Endothelial cell of umbilical vein (primary cell): ENCODE measurements at regions of chr19 and their contacts with region 1.

Region 1: GRCh38 chr19:45886427-45887199 is 672 bp upstream of the IRF2BP1 start:
- DNase-seq: peak; percentile 92
- H3K4me3 ChIP-seq: peak overlapping the region; percentile 48 to 94 (median 57)
- H3K27ac ChIP-seq: peak overlapping the region; percentile 80
- H3K4me1 ChIP-seq: peaks cover 10% of the 10 kb centered on the region
- H3K27me3 ChIP-seq: no peaks in the 10 kb centered on the region
- CTCF ChIP-seq: no peak
- POLR2A ChIP-seq: peak; percentile 83

Region 2: GRCh38 chr19:45862564-45863334 is 23.9 kb before region 1 on chr19 and contains the start of gene SYMPK:
- CTCF ChIA-PET with region 1: interaction called, 24 read pairs
- POLR2A ChIA-PET with region 1: interaction called, 3 read pairs
- dilution Hi-C with region 1: no loop called
- intact Hi-C with region 1: loop called (anchors 1 kb)
- DNase-seq: peak; percentile 99
- H3K4me3 ChIP-seq: peak within 1 kb of the TSS; percentile 49 to 90 (median 86)
- H3K27ac ChIP-seq: peak within 1 kb of the TSS; percentile 53
- H3K4me1 ChIP-seq: peaks cover 4% of the 10 kb centered on the region
- H3K27me3 ChIP-seq: peaks cover 20 to 22% of the 10 kb centered on the region in 2 experiments
- CTCF ChIP-seq: no peak
- POLR2A ChIP-seq: peak; percentile 90
- total RNA-seq, gene SYMPK: 94.5 and 95.7 TPM in 2 replicates

Region 3: DNA sequence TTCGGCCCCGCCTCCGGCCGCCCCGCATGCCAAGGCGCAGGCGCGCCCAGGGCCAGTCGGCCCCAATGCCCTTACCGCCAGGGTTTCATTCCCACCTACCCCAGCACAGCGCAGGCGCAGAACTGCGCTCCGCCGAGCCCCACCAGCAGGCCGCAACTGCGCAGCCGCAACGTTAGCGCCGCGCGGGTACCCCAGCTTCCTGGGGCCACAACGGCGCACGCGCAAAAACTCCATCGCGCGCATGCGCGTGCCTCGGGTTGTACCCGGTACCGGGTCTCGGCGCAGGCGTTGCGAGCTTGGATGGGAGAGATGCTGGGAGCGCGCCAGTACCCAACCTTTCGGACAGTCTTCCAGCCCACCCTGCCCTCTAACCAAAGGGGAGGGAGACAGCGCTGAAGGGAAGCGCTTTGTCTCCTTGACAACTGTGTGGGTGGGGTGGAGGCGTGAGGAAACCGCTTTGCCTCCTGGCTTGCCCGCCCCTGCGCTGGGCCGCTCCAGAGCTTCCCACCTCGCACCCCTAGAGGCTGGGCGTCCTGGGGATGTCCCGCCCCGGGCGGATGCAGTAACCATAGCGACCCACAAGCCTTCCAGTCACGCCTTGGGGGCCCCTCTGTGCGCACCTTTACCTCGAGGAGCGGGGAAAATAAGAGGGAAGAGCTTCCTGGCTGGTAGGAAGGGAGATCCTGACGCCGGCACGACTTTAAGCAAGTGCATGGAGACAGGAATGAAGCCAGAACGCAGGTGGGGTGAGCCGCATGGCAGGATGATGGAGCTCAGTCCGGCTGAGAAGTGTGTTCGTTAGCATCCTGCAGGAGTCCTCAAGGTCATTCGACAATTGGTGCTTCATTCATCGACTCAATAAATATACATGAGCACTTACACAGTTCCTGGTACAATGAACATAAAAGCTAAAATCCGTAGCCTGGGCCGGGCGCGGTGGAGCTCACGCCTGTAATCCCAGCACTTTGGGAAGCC is 16.3 kb after region 1 on chr19:
- CTCF ChIA-PET with region 1: interaction called, 3 read pairs
- POLR2A ChIA-PET with region 1: interaction called, 6 read pairs
- dilution Hi-C with region 1: no loop called
- intact Hi-C with region 1: loop called (anchors 1 kb)
- DNase-seq: peak; percentile 99
- H3K4me3 ChIP-seq: peak overlapping the region; percentile 4 to 55 (median 36)
- H3K27ac ChIP-seq: no peak overlapping the region
- H3K4me1 ChIP-seq: peaks cover 7% of the 10 kb centered on the region
- H3K27me3 ChIP-seq: no peaks in the 10 kb centered on the region
- CTCF ChIP-seq: no peak
- POLR2A ChIP-seq: peak; percentile 94

Region 4: DNA sequence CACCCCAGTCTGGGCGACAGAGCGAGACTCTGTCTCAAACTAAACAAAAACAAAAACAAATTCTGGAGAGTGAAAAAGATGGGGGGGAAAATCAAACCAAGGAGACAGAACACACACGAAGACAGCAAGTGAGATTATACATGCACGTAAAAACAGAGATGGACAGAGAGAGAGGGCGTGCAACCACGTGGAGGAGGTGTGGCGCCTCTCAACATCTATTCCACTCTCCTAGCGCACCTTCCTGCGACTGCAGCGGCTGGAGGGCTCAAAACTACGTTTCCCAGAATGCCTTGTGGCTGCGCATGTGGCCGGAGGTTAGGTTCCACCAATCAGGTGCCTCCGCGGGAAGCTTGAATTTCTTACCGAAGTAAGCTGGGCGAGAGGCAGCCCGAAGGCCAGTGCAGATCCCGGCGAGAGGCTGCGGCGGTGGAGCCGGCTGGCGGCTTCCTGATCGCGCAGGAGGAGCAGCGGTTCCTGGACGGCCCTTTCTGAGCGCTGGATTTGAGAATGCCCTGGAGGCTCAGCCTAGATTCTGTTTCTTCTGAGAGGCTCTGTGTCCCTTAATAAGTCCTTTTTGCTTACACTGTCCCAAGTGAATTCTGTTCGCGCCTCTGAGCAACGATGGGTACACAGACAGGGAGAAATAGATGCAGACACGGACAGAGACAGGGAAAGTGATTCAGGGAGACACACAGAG is 41.1 kb after region 1 on chr19:
- CTCF ChIA-PET with region 1: no interaction called
- POLR2A ChIA-PET with region 1: no interaction called
- dilution Hi-C with region 1: no loop called
- intact Hi-C with region 1: loop called (anchors 1 kb)
- DNase-seq: peak; percentile 91
- H3K4me3 ChIP-seq: no peak overlapping the region
- H3K27ac ChIP-seq: no peak overlapping the region
- H3K4me1 ChIP-seq: peaks cover 6% of the 10 kb centered on the region
- H3K27me3 ChIP-seq: no peaks in the 10 kb centered on the region
- CTCF ChIP-seq: no peak
- POLR2A ChIP-seq: peak; percentile 47

Region 5: GRCh38 chr19:46016426-46017094 is 129.9 kb after region 1 on chr19:
- CTCF ChIA-PET with region 1: interaction called, 4 read pairs
- POLR2A ChIA-PET with region 1: no interaction called
- dilution Hi-C with region 1: no loop called
- intact Hi-C with region 1: loop called (anchors 1 kb)
- DNase-seq: peak; percentile 76
- H3K4me3 ChIP-seq: peak overlapping the region; percentile 47 to 69 (median 59)
- H3K27ac ChIP-seq: no peak overlapping the region
- H3K4me1 ChIP-seq: peaks cover 11% of the 10 kb centered on the region
- H3K27me3 ChIP-seq: peaks cover 4 to 8% of the 10 kb centered on the region in 2 experiments
- CTCF ChIP-seq: peak; percentile 56 to 86
- POLR2A ChIP-seq: no peak